CD8-positive, alpha-beta memory T cell (primary cell): ENCODE measurements at regions of chr3 and their contacts with region 1.

Region 1: DNA sequence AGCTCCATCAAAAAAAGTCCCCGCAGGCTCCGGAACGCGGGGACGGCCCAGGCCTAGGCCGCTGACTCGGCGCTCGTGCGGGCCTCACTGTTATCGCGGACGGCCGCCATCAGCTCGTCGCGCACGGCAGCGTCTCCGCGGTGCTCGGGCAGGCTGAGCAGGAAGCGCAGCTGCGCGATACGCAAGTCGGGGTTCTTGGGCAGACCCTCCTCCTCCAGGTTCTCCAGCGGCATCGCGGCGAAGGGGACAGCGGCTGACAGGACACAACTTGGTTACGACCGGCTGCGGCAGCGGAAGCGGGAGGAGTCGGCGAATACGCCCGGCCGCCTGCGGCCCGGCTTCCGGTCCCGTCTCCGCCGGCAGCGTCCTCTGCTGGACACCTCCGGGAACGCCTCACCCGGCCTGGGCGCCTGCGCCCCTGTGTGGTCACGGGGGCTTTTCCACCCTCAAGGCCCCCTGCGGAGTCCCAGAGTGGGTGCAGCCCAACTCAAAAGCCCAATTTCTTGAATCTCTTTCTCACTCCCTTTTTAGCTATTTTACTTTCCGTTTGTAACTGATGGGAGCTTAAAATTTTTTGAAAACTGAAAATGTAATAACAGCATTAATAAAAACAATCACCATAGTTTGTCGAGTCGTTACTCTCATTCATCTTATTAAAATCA is at the start of gene PSMD6:
- DNase-seq: peak; percentile 88 to 96 (median 91)
- H3K4me3 ChIP-seq: peak within 1 kb of the TSS; percentile 91
- H3K4me3 Mint-ChIP-seq: peak within 1 kb of the TSS; percentile 85 to 95 (median 88)
- H3K27ac ChIP-seq: peak within 1 kb of the TSS; percentile 78
- H3K27ac Mint-ChIP-seq: peak within 1 kb of the TSS; percentile 61 to 97 (median 90)
- H3K4me1 ChIP-seq: peaks cover 27% of the 10 kb centered on the region
- H3K4me1 Mint-ChIP-seq: peaks cover 27 to 42% (median 36%) of the 10 kb centered on the region in 3 donors
- H3K27me3 ChIP-seq: no peaks in the 10 kb centered on the region
- H3K27me3 Mint-ChIP-seq: peaks cover 10 to 15% of the 10 kb centered on the region in 2 donors
- total RNA-seq, gene PSMD6: 134 to 136 TPM

Region 2: DNA sequence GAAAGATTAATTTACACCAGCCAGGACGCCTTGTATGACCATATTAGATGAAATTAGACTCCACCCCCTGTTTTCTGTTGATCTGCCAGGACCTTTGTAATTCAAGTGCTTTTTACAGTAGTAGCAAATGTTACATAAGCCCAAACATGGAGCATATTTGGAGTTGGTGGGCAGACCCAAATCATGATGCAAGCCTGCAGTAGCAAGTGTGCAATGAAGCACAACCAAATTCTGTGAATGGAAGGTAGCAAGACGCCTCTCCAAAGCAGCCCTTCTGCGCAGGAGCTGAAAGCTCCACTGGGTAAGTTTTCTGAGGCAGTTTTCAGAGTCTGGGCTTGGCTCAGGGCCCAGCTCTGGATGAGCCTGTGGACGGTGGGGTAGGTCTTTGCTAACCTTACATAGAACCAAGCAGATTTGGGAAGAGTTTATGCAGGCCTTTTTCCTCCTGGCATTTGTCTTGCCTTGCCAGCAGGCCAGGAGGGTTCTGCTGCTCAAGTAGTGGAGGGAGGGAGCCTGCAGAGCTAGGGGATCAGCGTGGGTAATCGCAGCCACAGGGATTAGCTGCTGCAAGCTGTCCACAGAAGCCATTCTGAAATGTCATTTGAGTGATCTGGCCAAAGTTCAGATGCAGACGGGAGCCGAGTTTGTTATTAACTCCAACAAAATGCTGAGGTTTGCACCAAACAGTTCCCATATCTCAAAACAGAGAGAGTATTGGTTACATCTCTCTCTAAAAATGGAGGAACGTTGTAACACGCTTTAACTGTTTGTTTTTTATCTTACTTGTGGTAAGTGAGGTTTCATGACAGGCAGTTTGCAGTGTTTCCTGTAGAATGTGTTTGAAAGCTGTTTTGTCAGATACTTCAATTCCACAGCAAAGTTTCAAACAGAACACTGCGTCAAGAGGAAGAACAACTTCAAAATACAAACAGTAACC is 55.4 kb before region 1 on chr3:
- CTCF ChIA-PET with region 1: interaction called, 42 read pairs
- POLR2A ChIA-PET with region 1: interaction called, 4 read pairs
- DNase-seq: peak; percentile 14 to 89 (median 63)
- H3K4me3 ChIP-seq: peak overlapping the region; percentile 98
- H3K4me3 Mint-ChIP-seq: peak overlapping the region; percentile 88 to 99 (median 90)
- H3K27ac ChIP-seq: peak overlapping the region; percentile 75
- H3K27ac Mint-ChIP-seq: peak overlapping the region; percentile 81 to 98 (median 94)
- H3K4me1 ChIP-seq: peaks cover 62% of the 10 kb centered on the region
- H3K4me1 Mint-ChIP-seq: peaks cover 58 to 97% (median 91%) of the 10 kb centered on the region in 3 donors
- H3K27me3 ChIP-seq: no peaks in the 10 kb centered on the region
- H3K27me3 Mint-ChIP-seq: no peaks in the 10 kb centered on the region

Region 3: GRCh38 chr3:63975723-63976122 is 47.6 kb before region 1 on chr3:
- CTCF ChIA-PET with region 1: interaction called, 22 read pairs
- POLR2A ChIA-PET with region 1: interaction called, 3 read pairs
- DNase-seq: no peak
- H3K4me3 ChIP-seq: no peak overlapping the region
- H3K4me3 Mint-ChIP-seq: peak overlapping the region; percentile 32 to 74 (median 49)
- H3K27ac ChIP-seq: no peak overlapping the region
- H3K27ac Mint-ChIP-seq: peak overlapping the region; percentile 68 to 95 (median 80)
- H3K4me1 ChIP-seq: peaks cover 92% of the 10 kb centered on the region
- H3K4me1 Mint-ChIP-seq: peaks cover 92 to 100% (median 100%) of the 10 kb centered on the region in 3 donors
- H3K27me3 ChIP-seq: no peaks in the 10 kb centered on the region
- H3K27me3 Mint-ChIP-seq: peaks cover 0 to 2% of the 10 kb centered on the region in 2 donors

Region 4: DNA sequence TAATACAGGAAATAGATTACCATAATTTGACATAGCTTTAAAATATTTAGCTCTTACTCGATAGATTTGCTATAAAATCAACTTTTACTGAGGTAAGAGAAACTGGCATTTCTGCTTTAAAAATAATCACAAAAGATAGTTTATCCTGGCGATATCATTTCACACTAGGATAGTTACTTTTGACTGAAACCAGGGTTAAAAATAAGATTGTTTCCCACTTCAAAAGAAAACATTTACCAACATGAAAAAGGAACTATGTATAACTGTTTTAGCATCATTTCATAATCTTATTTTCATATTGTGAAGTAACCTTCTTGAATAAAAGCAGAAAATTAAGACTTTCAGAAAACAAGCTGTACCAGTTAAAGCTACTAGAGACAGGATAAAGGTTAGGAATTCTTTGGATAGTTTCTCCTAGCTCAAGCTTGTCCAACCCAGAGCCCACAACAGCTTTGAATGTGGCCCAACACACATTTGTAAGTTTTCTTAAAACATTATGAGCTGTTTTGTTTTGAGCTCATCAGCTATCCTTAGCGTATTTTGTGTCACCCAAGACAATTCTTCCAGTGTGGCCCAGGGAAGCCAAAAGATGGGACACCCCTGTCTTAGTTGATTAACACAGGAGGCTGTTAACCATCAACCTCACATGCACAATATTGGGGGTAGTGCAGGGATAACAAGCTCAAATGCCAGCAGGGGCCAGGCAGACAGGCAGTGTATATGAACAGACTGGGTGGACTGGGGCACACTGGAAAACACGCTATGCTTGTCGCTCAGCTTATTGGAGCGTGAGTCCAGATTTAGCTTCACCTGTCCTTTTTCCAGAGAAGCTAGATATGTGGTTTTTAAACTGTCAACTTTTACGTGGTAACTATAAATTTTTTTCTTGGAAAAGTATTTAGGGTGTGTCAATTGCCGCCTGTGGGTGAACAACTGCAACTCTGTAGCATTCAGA is 15.0 kb before region 1 on chr3:
- CTCF ChIA-PET with region 1: interaction called, 23 read pairs
- POLR2A ChIA-PET with region 1: interaction called, 3 read pairs
- DNase-seq: no peak
- H3K4me3 ChIP-seq: no peak overlapping the region
- H3K4me3 Mint-ChIP-seq: no peak overlapping the region
- H3K27ac ChIP-seq: no peak overlapping the region
- H3K27ac Mint-ChIP-seq: peak overlapping the region in 6 of 8 donors; percentile 1 to 94 (median 56)
- H3K4me1 ChIP-seq: no peaks in the 10 kb centered on the region
- H3K4me1 Mint-ChIP-seq: peaks cover 10 to 35% (median 24%) of the 10 kb centered on the region in 3 donors
- H3K27me3 ChIP-seq: no peaks in the 10 kb centered on the region
- H3K27me3 Mint-ChIP-seq: no peaks in the 10 kb centered on the region

Region 5: GRCh38 chr3:64093825-64094712 is 70.8 kb after region 1 on chr3:
- CTCF ChIA-PET with region 1: no interaction called
- POLR2A ChIA-PET with region 1: no interaction called
- DNase-seq: no peak
- H3K4me3 ChIP-seq: no peak overlapping the region
- H3K4me3 Mint-ChIP-seq: no peak overlapping the region
- H3K27ac ChIP-seq: no peak overlapping the region
- H3K27ac Mint-ChIP-seq: no peak overlapping the region
- H3K4me1 ChIP-seq: no peaks in the 10 kb centered on the region
- H3K4me1 Mint-ChIP-seq: no peaks in the 10 kb centered on the region
- H3K27me3 ChIP-seq: no peaks in the 10 kb centered on the region
- H3K27me3 Mint-ChIP-seq: peaks cover 7 to 16% of the 10 kb centered on the region in 2 donors